PC-9 (cell line): ENCODE measurements at regions of chr18 and their contacts with region 1.

Region 1: DNA sequence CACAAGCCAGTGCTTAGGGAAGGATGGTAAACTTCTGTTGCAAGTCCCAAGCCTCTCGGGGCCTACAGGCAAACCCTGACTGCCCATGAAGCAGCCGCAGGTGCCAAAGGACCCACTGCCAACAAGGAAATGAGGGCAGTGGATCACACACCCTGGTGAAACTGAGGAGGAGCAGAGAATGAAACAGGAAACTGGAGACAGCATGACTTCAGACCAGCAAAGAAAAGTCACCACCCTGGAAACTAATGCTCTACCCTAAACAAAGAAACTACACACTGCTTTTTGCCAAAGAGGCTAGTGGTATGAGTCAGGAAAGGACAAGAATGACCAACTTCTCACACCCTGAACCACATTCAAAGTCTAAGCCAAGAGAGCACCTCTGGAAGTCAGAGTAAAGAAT is 97.2 kb downstream of the MYO5B start:
- DNase-seq: peak; percentile 63 to 98
- H3K4me3 ChIP-seq: peak overlapping the region; percentile 1; the same call in 1 of the 2 replicates
- H3K27ac ChIP-seq: peak overlapping the region; percentile 97
- H3K4me1 ChIP-seq: peaks cover 58% of the 10 kb centered on the region
- H3K27me3 ChIP-seq: no peaks in the 10 kb centered on the region
- CTCF ChIP-seq: no peak

Region 2: DNA sequence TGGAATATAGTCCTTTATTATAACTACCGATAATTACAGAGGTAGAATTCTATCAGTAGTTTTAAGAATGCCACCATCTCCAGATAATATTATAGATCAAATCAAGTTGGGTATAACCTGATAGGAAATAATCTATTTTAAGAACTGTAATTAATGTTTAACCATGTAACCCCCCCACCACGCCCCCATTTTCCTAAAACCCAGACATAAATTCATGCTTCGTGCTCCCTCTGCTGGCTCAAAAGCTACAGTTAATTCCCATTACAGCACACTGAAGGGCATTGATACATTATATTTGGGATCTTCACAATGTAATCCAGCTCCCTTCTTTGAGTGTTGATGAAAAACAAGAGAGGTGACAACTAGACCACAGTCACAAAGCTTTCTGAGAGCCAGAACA is 919.0 kb before region 1 on chr18:
- CTCF ChIA-PET with region 1: no interaction called
- POLR2A ChIA-PET with region 1: no interaction called
- intact Hi-C with region 1: no loop called
- DNase-seq: no peak
- H3K4me3 ChIP-seq: no peak overlapping the region
- H3K27ac ChIP-seq: no peak overlapping the region
- H3K4me1 ChIP-seq: 0 out of 2 replicates have a peak, but pooled peaks cover 5% of the 10 kb centered on the region
- H3K27me3 ChIP-seq: no peaks in the 10 kb centered on the region
- CTCF ChIP-seq: peak; percentile 73

Region 3: DNA sequence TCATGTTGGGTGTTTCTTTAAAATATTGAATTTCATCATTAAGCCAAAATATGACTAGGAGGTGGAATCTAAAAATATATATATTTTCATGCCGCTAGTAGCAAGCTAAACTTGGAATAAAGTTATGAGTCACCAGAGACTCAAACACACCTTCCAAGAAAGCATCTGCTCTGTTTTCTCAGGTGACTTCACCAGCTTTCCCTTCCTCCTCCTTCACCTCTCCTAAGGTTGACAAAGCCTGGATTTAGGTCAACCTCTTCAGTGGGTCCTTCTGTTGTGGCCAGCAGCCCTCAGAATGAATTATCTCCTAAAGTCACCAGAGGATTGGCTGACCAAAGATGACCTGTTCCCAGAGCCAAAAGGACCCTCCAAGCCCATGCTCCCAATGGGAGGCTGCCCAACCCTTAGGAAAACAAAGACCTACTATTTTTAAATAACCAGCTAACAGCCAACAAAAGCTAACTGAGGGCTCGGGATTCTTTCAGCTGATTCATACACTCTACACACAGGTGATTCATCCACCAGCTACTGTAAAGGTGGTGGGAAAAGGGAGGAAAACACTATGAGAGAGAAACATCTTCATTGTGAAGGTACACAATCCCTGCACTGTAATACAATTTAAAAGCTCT is 16.7 kb before region 1 on chr18:
- CTCF ChIA-PET with region 1: no interaction called
- POLR2A ChIA-PET with region 1: interaction called, 4 read pairs
- intact Hi-C with region 1: loop called (anchors 1 kb)
- DNase-seq: peak; percentile 41 to 89
- H3K4me3 ChIP-seq: peak overlapping the region; percentile 19; the same call in 1 of the 2 replicates
- H3K27ac ChIP-seq: peak overlapping the region; percentile 91
- H3K4me1 ChIP-seq: peaks cover 34% of the 10 kb centered on the region
- H3K27me3 ChIP-seq: no peaks in the 10 kb centered on the region
- CTCF ChIP-seq: no peak

Region 4: GRCh38 chr18:50158923-50159653 is 61.4 kb after region 1 on chr18:
- CTCF ChIA-PET with region 1: no interaction called
- POLR2A ChIA-PET with region 1: interaction called, 3 read pairs
- intact Hi-C with region 1: loop called (anchors 2 kb)
- DNase-seq: peak; percentile 48 to 98
- H3K4me3 ChIP-seq: peak overlapping the region; percentile 9; the same call in 1 of the 2 replicates
- H3K27ac ChIP-seq: peak overlapping the region; percentile 78
- H3K4me1 ChIP-seq: peaks cover 86% of the 10 kb centered on the region
- H3K27me3 ChIP-seq: no peaks in the 10 kb centered on the region
- CTCF ChIP-seq: no peak